Ovary (tissue), 10 donors: ENCODE measurements at regions of chr7 and their contacts with region 1.

Region 1: GRCh38 chr7:116588641-116589594 is 64.1 kb downstream of the CAV1 start:
- DNase-seq: no peak
- H3K4me3 ChIP-seq: no peak overlapping the region
- H3K27ac ChIP-seq: no peak overlapping the region
- H3K4me1 ChIP-seq: peaks cover 4% of the 10 kb centered on the region
- H3K27me3 ChIP-seq: no peaks in the 10 kb centered on the region
- CTCF ChIP-seq: peak; percentile 60 to 82 (median 70)
- EP300 ChIP-seq: no peak
- POLR2A ChIP-seq: no peak

Region 2: GRCh38 chr7:116173051-116174028 is 415.6 kb before region 1 on chr7:
- intact Hi-C with region 1: loop called in 1 of 4 experiments (anchors 10 kb)
- DNase-seq: no peak
- H3K4me3 ChIP-seq: no peak overlapping the region
- H3K27ac ChIP-seq: no peak overlapping the region
- H3K4me1 ChIP-seq: no peaks in the 10 kb centered on the region
- H3K27me3 ChIP-seq: no peaks in the 10 kb centered on the region
- CTCF ChIP-seq: peak in 1 of 3 donors; percentile 53
- EP300 ChIP-seq: no peak
- POLR2A ChIP-seq: no peak

Region 3: DNA sequence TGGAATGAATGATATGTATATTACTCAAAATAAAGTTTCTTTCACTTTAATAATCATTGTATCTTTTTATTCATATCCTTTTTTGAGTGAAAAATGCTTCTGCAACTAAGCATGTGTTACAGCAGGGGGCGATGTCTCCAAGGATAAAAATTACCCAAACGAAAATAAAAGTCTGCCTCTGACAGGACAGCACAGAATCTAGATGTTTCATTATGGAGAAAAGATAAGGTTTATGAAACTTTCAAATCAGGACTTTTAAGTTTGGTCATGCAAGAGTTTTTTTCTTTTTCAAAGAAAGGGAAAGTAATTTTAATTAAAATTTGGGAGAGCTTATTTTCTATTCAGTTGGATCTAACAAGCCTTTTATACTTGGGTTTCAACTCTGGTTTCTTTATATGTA is 330.2 kb before region 1 on chr7:
- intact Hi-C with region 1: loop called (anchors 2 to 5 kb)
- DNase-seq: peak in 2 of 5 donors; percentile 19 to 44
- H3K4me3 ChIP-seq: no peak overlapping the region
- H3K27ac ChIP-seq: no peak overlapping the region
- H3K4me1 ChIP-seq: no peaks in the 10 kb centered on the region
- H3K27me3 ChIP-seq: no peaks in the 10 kb centered on the region
- CTCF ChIP-seq: peak; percentile 76 to 96 (median 93)
- EP300 ChIP-seq: no peak
- POLR2A ChIP-seq: no peak

Region 4: DNA sequence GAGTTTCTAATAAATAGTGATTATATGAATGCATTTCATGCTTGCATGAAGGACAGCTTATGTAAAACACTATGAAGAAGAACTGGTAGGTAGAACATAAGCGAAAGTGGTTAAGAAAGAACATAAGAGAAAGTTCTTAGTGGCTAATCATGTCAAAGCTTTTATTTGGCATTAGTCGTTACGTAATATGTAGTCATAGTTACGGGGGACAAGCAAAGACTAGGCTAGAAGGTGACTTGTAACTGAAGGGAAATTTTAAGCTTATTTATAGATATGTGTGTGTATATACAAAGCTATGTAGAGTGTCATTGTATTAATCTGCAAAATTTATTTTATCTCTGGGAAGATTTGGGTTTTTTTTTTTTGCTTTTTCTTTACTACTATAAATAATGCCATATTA is 310.4 kb after region 1 on chr7:
- intact Hi-C with region 1: no loop called
- DNase-seq: no peak
- H3K4me3 ChIP-seq: no peak overlapping the region
- H3K27ac ChIP-seq: no peak overlapping the region
- H3K4me1 ChIP-seq: no peaks in the 10 kb centered on the region
- H3K27me3 ChIP-seq: no peaks in the 10 kb centered on the region
- CTCF ChIP-seq: no peak
- EP300 ChIP-seq: no peak
- POLR2A ChIP-seq: no peak